MCF 10A (cell line): ENCODE measurements at regions of chr14 and their contacts with region 1.

Region 1: GRCh38 chr14:94428610-94429009 is 24.0 kb downstream of the SERPINA11 start:
- DNase-seq: no peak
- H3K4me3 Mint-ChIP-seq: no peak overlapping the region
- H3K27ac Mint-ChIP-seq: no peak overlapping the region
- H3K4me1 Mint-ChIP-seq: no peaks in the 10 kb centered on the region
- H3K27me3 Mint-ChIP-seq: no peaks in the 10 kb centered on the region
- CTCF ChIP-seq: no peak

Region 2: GRCh38 chr14:94411638-94412037 is 17.0 kb before region 1 on chr14:
- CTCF ChIA-PET with region 1: no interaction called
- POLR2A ChIA-PET with region 1: no interaction called
- intact Hi-C with region 1: no loop called
- DNase-seq: no peak
- H3K4me3 Mint-ChIP-seq: no peak overlapping the region
- H3K27ac Mint-ChIP-seq: no peak overlapping the region
- H3K4me1 Mint-ChIP-seq: peaks cover 8% of the 10 kb centered on the region
- H3K27me3 Mint-ChIP-seq: no peaks in the 10 kb centered on the region
- CTCF ChIP-seq: no peak

Region 3: DNA sequence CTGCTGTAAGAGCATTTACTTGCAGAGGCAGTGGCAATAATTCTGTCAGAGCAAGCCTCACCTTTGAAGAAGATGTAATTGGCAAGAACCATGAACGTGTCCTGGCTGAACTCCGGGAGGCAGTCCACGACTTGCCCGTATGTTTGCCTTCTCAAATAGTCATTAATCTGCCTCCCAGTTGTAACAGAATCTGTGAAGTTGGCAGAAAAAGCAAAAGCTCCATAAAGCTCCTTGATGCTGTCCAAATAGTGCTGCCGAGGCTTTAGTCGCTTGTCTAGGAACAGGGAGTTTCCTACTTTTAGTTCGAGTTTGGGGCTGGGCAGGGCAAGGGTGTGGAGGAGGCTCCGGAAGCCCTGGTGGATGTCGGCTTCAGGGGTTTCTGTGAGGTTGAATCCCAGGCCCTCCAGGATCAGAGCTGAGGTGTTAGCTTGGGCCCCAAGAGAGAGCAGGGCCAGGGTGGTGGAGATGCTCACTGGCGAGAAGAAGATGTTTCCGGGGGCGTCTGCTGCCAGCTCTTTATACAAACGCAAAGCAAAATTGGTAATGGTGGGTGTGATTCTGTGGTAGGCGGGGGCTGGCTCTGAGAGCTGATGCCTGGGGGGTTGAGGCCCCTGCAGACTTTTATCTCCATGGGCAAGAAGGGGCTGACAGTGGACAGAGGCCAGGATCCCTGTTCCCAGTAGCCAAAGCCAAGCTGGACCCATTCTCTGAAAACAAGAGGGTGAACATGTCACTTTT is 19.6 kb after region 1 on chr14:
- CTCF ChIA-PET with region 1: interaction called, 15 read pairs
- POLR2A ChIA-PET with region 1: no interaction called
- intact Hi-C with region 1: no loop called
- DNase-seq: no peak
- H3K4me3 Mint-ChIP-seq: no peak overlapping the region
- H3K27ac Mint-ChIP-seq: no peak overlapping the region
- H3K4me1 Mint-ChIP-seq: no peaks in the 10 kb centered on the region
- H3K27me3 Mint-ChIP-seq: peaks cover 44% of the 10 kb centered on the region
- CTCF ChIP-seq: no peak

Region 4: DNA sequence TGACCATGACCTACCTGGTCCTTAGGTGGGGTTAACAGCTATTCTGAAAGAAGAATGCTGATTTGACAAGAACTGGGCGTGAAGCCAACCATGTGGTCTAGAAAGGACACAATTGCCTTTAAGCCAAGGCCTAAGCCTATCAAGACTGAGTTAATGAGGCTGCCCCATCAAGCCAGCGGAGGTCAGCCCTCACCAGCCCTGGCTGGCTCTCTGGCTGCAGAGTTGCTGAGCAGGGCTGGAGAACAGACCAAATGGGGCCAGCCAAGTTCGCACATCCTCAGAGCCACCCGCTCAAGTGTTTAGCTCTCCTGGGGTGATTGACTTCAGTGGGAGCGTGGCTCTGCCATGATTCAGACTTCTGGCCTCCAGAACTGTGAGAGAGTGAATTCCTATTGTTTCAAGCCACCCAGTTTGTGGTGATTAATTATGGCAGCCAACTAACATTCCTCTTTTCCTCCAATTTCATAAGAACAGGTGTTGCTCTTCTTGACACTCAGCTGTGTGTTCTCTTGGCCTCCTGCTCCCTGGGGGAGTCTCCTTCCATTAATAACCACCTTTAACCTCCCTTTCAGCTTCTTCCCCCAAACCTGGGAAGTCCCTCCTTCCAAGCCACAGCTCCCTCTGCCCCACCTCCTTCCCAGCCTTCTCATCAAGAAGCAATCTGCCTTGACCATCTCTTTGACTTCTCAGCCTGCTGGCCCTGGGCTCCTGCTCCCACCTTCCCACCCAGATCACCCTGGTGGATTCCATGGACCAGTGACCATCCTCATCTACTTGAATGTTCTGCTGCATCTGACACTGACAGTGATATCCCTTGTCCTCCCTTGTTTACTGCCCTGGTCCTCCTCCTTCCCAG is 147.3 kb after region 1 on chr14:
- CTCF ChIA-PET with region 1: no interaction called
- POLR2A ChIA-PET with region 1: no interaction called
- intact Hi-C with region 1: no loop called
- DNase-seq: peak; percentile 61
- H3K4me3 Mint-ChIP-seq: no peak overlapping the region
- H3K27ac Mint-ChIP-seq: no peak overlapping the region
- H3K4me1 Mint-ChIP-seq: peaks cover 8% of the 10 kb centered on the region
- H3K27me3 Mint-ChIP-seq: no peaks in the 10 kb centered on the region
- CTCF ChIP-seq: no peak